ENCODE measurements at regions of chr12 and their contacts with region 1.

Region 1: DNA sequence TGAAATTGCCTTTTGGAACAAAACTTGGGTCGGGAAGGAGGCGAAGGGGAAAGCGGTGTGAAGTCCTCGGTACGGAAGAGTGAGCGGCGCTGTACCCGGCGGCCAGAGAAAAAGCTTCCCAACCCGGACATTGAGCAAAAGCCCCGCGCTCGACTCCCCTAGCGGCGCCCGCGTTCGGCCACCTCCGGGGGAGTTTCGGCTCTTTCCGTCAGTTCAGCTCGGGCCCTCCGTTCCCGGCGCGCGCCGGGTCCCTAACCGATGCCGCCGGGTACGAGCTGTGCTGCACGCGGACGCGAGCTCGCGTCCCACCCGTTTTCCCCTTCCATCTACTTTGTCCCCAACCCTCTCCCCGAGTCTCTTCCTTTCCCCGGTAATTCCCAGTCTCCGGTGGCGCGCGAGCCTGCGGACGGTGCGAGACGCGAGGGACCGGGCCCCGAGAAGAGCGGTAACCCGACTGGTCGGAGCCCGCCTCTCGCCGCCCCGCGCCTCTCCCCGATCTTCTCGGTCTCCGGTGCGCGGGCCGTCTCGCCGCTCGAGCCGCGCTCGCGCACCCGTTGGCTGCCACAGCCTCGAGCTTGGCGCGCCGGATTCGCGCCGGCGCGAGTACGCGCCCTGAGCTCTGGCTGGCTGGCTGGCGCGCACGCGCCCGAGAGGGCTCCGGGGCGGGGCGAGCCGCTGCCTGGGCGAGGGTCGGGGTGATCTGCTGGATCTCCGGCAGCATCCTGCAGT is 446 bp upstream of the SPATS2 start:
- DNase-seq: peak; percentile 91
- H3K4me3 Mint-ChIP-seq: peak overlapping the region; percentile 96
- H3K27ac Mint-ChIP-seq: peak overlapping the region; percentile 93
- H3K4me1 Mint-ChIP-seq: peaks cover 35% of the 10 kb centered on the region
- H3K27me3 Mint-ChIP-seq: peaks cover 2% of the 10 kb centered on the region

Region 2: DNA sequence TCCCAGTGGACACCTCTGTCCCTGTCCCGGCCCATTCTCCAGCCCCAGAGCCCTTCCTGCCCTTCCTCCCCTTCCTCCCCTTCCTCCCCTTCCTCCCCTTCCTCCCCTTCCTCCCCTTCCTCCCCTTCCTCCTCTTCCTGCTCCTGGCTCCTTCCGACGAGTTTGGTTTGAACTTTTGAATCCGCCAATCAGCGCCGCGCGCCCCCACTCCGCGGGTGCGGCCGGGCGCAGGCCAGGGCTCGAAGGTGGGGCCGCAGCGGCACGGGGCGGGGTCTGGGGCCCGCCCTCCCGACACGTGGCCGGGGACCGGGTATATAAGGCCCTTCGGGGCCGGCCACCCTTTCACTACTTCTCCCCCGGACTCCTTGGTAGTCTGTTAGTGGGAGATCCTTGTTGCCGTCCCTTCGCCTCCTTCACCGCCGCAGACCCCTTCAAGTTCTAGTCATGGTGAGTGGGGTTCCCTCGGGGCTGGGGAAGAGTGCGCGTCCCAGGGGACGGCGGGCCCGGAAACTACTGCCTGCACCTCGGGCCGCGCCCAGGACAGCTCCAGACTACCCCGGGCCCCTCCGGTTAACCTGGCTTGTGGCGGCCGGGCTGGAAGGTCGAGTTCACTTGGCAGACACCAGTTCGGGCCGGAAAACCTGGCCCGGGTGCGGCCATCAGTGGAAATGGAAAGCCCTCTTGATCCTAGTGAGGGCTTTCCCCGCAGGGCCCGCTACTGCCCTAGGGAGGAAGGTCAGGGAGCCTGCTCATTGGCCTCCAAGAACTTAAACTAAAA is 101.9 kb before region 1 on chr12 and contains the start of gene TUBA1C:
- CTCF ChIA-PET with region 1: no interaction called
- POLR2A ChIA-PET with region 1: interaction called, 44 read pairs
- DNase-seq: peak; percentile 93
- H3K4me3 Mint-ChIP-seq: peak within 1 kb of the TSS; percentile 95
- H3K27ac Mint-ChIP-seq: peak within 1 kb of the TSS; percentile 95
- H3K4me1 Mint-ChIP-seq: peaks cover 56% of the 10 kb centered on the region
- H3K27me3 Mint-ChIP-seq: no peaks in the 10 kb centered on the region
- total RNA-seq, gene TUBA1C: 250 to 262 TPM

Region 3: GRCh38 chr12:49342066-49342913 is 24.5 kb before region 1 on chr12:
- CTCF ChIA-PET with region 1: interaction called, 27 read pairs
- POLR2A ChIA-PET with region 1: interaction called, 12 read pairs
- DNase-seq: peak; percentile 80
- H3K4me3 Mint-ChIP-seq: peak overlapping the region; percentile 35
- H3K27ac Mint-ChIP-seq: no peak overlapping the region
- H3K4me1 Mint-ChIP-seq: peaks cover 40% of the 10 kb centered on the region
- H3K27me3 Mint-ChIP-seq: peaks cover 90% of the 10 kb centered on the region

Region 4: GRCh38 chr12:49503674-49504180 is 136.9 kb after region 1 on chr12:
- CTCF ChIA-PET with region 1: interaction called, 10 read pairs
- POLR2A ChIA-PET with region 1: interaction called, 5 read pairs
- DNase-seq: no peak
- H3K4me3 Mint-ChIP-seq: no peak overlapping the region
- H3K27ac Mint-ChIP-seq: no peak overlapping the region
- H3K4me1 Mint-ChIP-seq: peaks cover 1% of the 10 kb centered on the region
- H3K27me3 Mint-ChIP-seq: no peaks in the 10 kb centered on the region

Region 5: GRCh38 chr12:49538510-49539403 is 171.9 kb after region 1 on chr12 and contains the start of gene KCNH3:
- CTCF ChIA-PET with region 1: interaction called, 7 read pairs
- POLR2A ChIA-PET with region 1: interaction called, 12 read pairs
- DNase-seq: peak; percentile 93
- H3K4me3 Mint-ChIP-seq: peak within 1 kb of the TSS; percentile 60
- H3K27ac Mint-ChIP-seq: no peak within 1 kb of the TSS
- H3K4me1 Mint-ChIP-seq: peaks cover 26% of the 10 kb centered on the region
- H3K27me3 Mint-ChIP-seq: peaks cover 49% of the 10 kb centered on the region
- total RNA-seq, gene KCNH3: 0.58 to 0.90 TPM

Region 6: GRCh38 chr12:49623142-49623904 is 256.5 kb after region 1 on chr12 and contains the start of gene PRPF40B:
- CTCF ChIA-PET with region 1: interaction called, 7 read pairs
- POLR2A ChIA-PET with region 1: interaction called, 11 read pairs
- DNase-seq: peak; percentile 86
- H3K4me3 Mint-ChIP-seq: peak within 1 kb of the TSS; percentile 77
- H3K27ac Mint-ChIP-seq: peak within 1 kb of the TSS; percentile 81
- H3K4me1 Mint-ChIP-seq: peaks cover 27% of the 10 kb centered on the region
- H3K27me3 Mint-ChIP-seq: peaks cover 34% of the 10 kb centered on the region
- total RNA-seq, gene PRPF40B: 8.0 to 8.7 TPM

Measured in activated CD4-positive, alpha-beta memory T cell treated with anti-CD3 and anti-CD28 coated beads, Interleukin-2, amount 10 ng/mL, durations not matched to agents 7 days and 5 days (primary cell).